ENCODE measurements at regions of chr6 and their contacts with region 1.

Region 1: DNA sequence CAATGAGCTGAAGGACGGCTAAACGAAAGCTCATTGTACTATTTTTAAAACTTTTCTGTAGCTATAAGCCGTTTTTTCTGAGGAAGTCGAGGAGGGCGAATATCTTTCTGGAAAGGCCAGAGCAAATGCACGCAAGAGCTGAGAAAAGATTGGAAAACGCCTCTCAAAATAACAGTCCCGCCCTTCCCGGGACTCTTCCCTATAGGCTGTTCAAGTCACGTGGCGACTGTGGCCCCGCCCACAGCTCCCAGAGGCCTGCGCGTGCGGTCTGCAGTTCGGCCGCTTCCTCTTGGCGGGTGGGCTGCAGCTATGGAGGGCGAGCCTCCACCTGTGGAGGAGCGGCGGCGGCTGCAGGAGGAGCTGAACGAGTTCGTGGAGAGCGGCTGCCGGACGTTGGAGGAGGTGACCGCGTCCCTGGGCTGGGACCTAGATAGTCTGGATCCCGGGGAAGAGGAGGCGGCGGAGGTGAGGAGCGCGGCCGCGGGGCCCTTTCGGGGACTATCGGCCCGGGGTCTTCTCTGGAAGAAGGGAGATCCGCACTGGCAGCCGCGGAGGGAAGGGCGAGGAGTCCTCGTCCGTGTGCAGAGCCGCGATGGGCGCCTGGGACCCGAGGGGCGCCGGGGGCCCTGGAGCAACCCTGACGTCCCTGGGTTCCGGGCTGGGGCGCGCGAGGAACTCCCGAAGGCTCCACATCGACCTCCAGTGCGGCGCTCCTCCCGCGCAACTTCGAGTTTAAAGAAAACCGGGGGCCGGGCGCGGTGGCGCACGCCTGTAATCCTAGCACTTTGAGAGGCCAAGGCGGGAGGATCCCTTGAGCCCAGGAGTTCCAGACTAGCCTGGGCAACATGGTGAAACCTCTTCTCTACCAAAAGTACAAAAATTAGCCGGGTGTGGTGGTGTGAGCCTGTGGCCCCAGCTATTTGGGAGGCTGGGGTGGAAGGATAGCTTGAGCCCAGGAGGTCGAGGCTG is at the start of gene SNRNP48:
- H3K4me3 ChIP-seq: peak within 1 kb of the TSS; percentile 93
- H3K27ac ChIP-seq: peak within 1 kb of the TSS; percentile 46; the same call in 1 of the 2 replicates
- H3K4me1 ChIP-seq: peaks cover 11% of the 10 kb centered on the region; the same call in 1 of the 2 replicates
- CTCF ChIP-seq: no peak

Region 2: GRCh38 chr6:7312616-7313504 is 277.4 kb before region 1 on chr6 and contains the start of gene SSR1:
- CTCF ChIA-PET with region 1: no interaction called
- POLR2A ChIA-PET with region 1: interaction called, 10 read pairs
- H3K4me3 ChIP-seq: peak within 1 kb of the TSS; percentile 78
- H3K27ac ChIP-seq: peak within 1 kb of the TSS; percentile 91
- H3K4me1 ChIP-seq: peaks cover 5% of the 10 kb centered on the region; the same call in 1 of the 2 replicates
- CTCF ChIP-seq: 0 out of 2 replicates have a peak, but pooled peaks have one; percentile 18

Region 3: DNA sequence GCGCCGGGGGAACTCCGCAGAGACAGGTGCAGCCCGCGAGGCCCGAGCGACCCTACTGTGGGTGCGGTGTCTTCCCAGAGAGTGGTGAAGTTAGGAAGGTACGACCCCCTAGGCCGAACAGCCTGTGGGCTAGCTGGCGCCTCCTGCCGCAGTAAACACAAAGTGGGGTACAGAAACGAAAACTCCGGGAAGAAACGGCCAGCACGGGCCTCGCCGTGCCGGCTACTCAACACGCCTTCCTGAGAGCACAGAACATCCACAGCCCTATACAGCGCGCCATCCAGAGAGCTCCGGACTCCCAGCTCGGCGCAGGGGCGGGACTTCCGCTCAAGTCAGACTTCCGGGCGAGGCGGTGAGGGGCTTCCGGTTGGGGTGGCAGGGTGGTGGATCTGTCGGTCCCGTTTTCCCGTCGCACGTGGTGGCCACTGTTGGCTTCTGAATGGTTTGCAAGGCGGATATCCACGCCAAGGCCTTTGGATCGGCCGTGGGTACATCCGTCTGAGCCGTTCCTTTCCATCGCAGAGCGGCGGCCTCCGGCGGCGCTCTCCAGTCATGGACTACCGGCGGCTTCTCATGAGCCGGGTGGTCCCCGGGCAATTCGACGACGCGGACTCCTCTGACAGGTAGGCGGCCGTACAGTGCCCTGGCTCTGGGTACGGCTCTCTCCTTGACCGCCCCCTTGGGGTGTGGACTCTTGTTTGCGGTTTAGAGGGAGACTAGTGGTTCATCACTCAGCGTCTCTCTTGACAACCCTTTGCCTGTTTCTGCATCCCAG is 200.6 kb before region 1 on chr6 and contains the starts of genes CAGE1 and RIOK1:
- CTCF ChIA-PET with region 1: no interaction called
- POLR2A ChIA-PET with region 1: interaction called, 30 read pairs
- H3K4me3 ChIP-seq: peak within 1 kb of the TSS; percentile 70
- H3K27ac ChIP-seq: peak within 1 kb of the TSS; percentile 93
- H3K4me1 ChIP-seq: peaks cover 7% of the 10 kb centered on the region
- CTCF ChIP-seq: peak; percentile 85

Region 4: GRCh38 chr6:7505187-7505811 is 84.9 kb before region 1 on chr6:
- CTCF ChIA-PET with region 1: no interaction called
- POLR2A ChIA-PET with region 1: interaction called, 12 read pairs
- H3K4me3 ChIP-seq: no peak overlapping the region
- H3K27ac ChIP-seq: peak overlapping the region; percentile 40
- H3K4me1 ChIP-seq: peaks cover 11% of the 10 kb centered on the region; the same call in 1 of the 2 replicates
- CTCF ChIP-seq: no peak